ENCODE measurements at regions of chrX and their contacts with region 1.

Region 1: GRCh38 chrX:39309018-39309635 is 507.9 kb downstream of the MID1IP1 start:
- DNase-seq: no peak
- ATAC-seq: peak in 2 of 4 donors; percentile 40 to 75
- H3K4me3 ChIP-seq: no peak overlapping the region
- H3K27ac ChIP-seq: peak overlapping the region in 7 of 12 donors; percentile 1 to 57 (median 42)
- H3K4me1 ChIP-seq: peaks cover 0 to 24% (median 9%) of the 10 kb centered on the region in 12 donors
- H3K27me3 ChIP-seq: no peaks in the 10 kb centered on the region
- CTCF ChIP-seq: no peak
- POLR2A ChIP-seq: no peak

Region 2: DNA sequence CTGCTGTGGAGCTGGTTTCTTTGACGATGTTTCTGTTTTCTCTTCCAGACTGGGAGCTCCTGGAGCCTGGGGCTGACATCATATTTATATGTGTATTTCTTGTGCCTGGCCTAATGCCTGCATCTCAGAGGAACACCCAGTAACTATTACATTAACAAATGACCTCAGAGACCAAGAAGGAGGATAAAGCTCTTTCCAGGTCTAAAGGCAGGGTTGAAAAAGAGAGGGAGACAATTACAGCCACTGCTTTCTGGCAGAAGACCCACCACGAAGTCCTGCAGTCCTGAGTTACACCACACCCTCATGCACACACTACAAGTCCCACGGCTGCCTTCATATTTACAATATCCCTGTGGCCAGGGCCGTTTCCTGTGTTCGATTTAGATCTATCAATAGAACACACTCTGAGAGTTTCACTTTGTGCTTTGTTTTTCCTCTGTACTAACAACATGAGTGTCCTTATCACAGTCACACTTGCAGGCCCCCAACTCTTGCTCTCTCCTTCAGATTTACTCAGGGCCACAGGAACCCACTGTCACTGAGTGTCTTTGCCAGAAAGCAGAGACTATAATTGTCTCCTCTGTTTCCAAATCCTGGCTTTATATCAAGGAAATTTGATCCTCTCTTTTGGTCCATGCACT is 27.7 kb after region 1 on chrX:
- intact Hi-C with region 1: loop called in 1 of 10 experiments (anchors 2 kb)
- DNase-seq: peak in 3 of 5 donors; percentile 20 to 28 (median 27)
- ATAC-seq: peak; percentile 72 to 92 (median 86)
- H3K4me3 ChIP-seq: no peak overlapping the region
- H3K27ac ChIP-seq: peak overlapping the region; percentile 9 to 71 (median 52)
- H3K4me1 ChIP-seq: peaks cover 0 to 27% (median 5%) of the 10 kb centered on the region in 12 donors
- H3K27me3 ChIP-seq: peaks cover 0 to 15% (median 0%) of the 10 kb centered on the region in 9 donors
- CTCF ChIP-seq: no peak
- POLR2A ChIP-seq: no peak

Region 3: GRCh38 chrX:39356119-39356807 is 47.1 kb after region 1 on chrX:
- intact Hi-C with region 1: no loop called
- DNase-seq: no peak
- ATAC-seq: no peak
- H3K4me3 ChIP-seq: no peak overlapping the region
- H3K27ac ChIP-seq: no peak overlapping the region
- H3K4me1 ChIP-seq: no peaks in the 10 kb centered on the region
- H3K27me3 ChIP-seq: peaks cover 0 to 10% (median 0%) of the 10 kb centered on the region in 9 donors
- CTCF ChIP-seq: no peak
- POLR2A ChIP-seq: no peak

Region 4: GRCh38 chrX:39418731-39419638 is 109.9 kb after region 1 on chrX:
- intact Hi-C with region 1: loop called in 1 of 10 experiments (anchors 10 kb)
- DNase-seq: peak; percentile 37 to 68 (median 60)
- ATAC-seq: peak; percentile 62 to 77 (median 68)
- H3K4me3 ChIP-seq: no peak overlapping the region
- H3K27ac ChIP-seq: peak overlapping the region in 9 of 12 donors; percentile 3 to 49 (median 26)
- H3K4me1 ChIP-seq: peaks cover 0 to 14% (median 0%) of the 10 kb centered on the region in 12 donors
- H3K27me3 ChIP-seq: peaks cover 0 to 6% (median 0%) of the 10 kb centered on the region in 9 donors
- CTCF ChIP-seq: no peak
- POLR2A ChIP-seq: no peak

Region 5: DNA sequence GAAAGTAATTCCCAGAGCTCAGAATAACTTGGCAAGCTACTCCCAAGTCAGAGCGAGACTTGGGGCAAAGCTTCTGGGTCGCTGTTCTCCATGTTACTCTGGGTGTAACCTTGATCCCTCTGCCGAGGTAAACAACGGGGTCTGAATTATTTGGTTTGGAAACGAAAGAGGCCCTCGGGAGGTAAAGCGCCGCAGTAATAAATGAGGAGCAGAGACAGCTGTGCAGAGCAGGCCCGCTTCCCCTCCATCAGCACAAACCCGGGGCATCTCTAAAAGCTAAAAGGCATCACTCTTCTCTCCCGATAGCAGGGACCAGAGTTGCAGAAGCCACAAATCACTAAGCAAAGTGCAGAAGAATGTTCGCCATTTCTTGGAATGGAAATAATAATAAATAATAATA is 227.1 kb after region 1 on chrX:
- intact Hi-C with region 1: no loop called
- DNase-seq: no peak
- ATAC-seq: no peak
- H3K4me3 ChIP-seq: no peak overlapping the region
- H3K27ac ChIP-seq: no peak overlapping the region
- H3K4me1 ChIP-seq: no peaks in the 10 kb centered on the region
- H3K27me3 ChIP-seq: peaks cover 0 to 29% (median 0%) of the 10 kb centered on the region in 9 donors
- CTCF ChIP-seq: no peak
- POLR2A ChIP-seq: no peak